Sigmoid colon (tissue), 7 donors: ENCODE measurements at regions of chr1 and their contacts with region 1.

Region 1: GRCh38 chr1:150532868-150533302 is 16.3 kb upstream of the ADAMTSL4 start:
- DNase-seq: no peak
- H3K4me3 ChIP-seq: no peak overlapping the region
- H3K27ac ChIP-seq: peak overlapping the region; percentile 69 to 86 (median 82)
- H3K4me1 ChIP-seq: peaks cover 0 to 45% (median 17%) of the 10 kb centered on the region in 4 donors
- H3K27me3 ChIP-seq: no peaks in the 10 kb centered on the region
- CTCF ChIP-seq: peak in 1 of 4 experiments; percentile 34
- EP300 ChIP-seq: no peak
- POLR2A ChIP-seq: no peak

Region 2: DNA sequence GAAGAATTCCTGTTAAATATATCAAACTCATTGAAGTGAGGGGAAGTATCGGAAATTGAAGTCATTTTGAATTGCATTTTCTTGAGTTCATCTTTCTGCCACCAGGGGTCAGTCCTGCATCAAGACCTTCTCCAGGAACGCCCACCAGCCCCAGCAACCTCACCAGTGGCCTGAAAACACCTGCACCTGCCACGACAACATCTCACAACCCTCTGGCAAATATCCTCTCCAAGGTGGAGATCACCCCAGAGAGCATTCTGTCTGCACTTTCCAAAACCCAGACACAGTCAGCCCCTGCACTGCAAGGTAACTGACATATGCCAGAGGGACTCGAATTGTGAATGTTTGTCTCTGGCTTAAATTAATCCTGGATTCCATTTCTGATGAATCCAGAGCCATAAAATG is 68.5 kb before region 1 on chr1:
- intact Hi-C with region 1: loop called (anchors 2 kb)
- DNase-seq: peak; percentile 78
- H3K4me3 ChIP-seq: no peak overlapping the region
- H3K27ac ChIP-seq: no peak overlapping the region
- H3K4me1 ChIP-seq: no peaks in the 10 kb centered on the region
- H3K27me3 ChIP-seq: no peaks in the 10 kb centered on the region
- CTCF ChIP-seq: peak; percentile 46 to 83 (median 78)
- EP300 ChIP-seq: no peak
- POLR2A ChIP-seq: no peak

Region 3: GRCh38 chr1:151267760-151268159 is 734.9 kb after region 1 on chr1:
- intact Hi-C with region 1: no loop called
- DNase-seq: no peak
- H3K4me3 ChIP-seq: no peak overlapping the region
- H3K27ac ChIP-seq: no peak overlapping the region
- H3K4me1 ChIP-seq: no peaks in the 10 kb centered on the region
- H3K27me3 ChIP-seq: no peaks in the 10 kb centered on the region
- CTCF ChIP-seq: no peak
- EP300 ChIP-seq: no peak
- POLR2A ChIP-seq: no peak